ENCODE measurements at regions of chr1 and their contacts with region 1.

Region 1: GRCh38 chr1:85628791-85629531 is 48.4 kb downstream of the CCN1 start:
- DNase-seq: peak; percentile 92
- H3K4me3 ChIP-seq: peak overlapping the region; percentile 46
- CTCF ChIP-seq: no peak

Region 2: GRCh38 chr1:85596947-85597346 is 32.0 kb before region 1 on chr1:
- CTCF ChIA-PET with region 1: no interaction called
- POLR2A ChIA-PET with region 1: no interaction called
- DNase-seq: no peak
- H3K4me3 ChIP-seq: no peak overlapping the region
- CTCF ChIP-seq: no peak

Region 3: DNA sequence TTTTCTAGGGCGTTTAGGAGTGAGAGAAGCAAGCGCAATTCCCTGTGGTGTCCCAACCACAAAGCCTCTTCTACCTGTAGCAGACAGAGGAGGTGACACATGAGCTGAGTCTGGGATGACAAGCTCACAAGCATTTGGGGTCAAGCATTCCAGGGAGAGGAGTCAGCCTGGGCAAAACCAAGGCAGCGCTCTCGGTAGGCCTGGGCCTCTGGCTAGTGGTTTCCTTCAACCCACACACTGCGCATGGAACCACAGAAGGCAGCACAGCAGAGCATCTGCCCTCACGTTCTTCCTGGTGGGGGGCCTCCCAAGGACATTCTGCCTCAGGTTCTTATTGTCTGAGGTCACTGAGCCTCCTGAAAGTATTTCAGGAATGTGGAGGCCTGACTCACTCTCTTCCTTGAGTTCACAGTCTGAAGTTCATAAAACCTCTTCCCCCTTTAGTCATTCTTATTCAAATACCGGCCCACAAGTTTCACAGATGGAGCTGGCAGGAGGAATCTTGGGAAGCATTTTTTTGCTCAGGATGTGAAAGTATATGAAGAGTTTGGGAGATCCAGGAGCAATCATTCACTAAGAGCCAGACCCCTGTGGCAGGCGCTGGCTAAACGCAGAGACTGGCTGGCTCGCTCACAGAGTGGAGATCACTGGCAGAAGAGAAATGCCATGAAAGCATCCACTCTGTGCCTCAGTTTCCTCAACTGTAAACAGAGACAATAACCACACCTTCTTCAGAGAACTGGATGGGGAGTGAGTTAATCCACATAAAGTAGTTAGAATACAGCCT is 21.6 kb before region 1 on chr1:
- CTCF ChIA-PET with region 1: interaction called, 46 read pairs
- POLR2A ChIA-PET with region 1: interaction called, 48 read pairs
- DNase-seq: peak; percentile 100
- H3K4me3 ChIP-seq: no peak overlapping the region
- CTCF ChIP-seq: no peak

Measured in AG04449 (cell line).